Aorta (tissue), 5 donors: ENCODE measurements at regions of chr17 and their contacts with region 1.

Region 1: GRCh38 chr17:33520426-33521330 is 227.6 kb upstream of the ASIC2 start:
- DNase-seq: no peak
- ATAC-seq: no peak
- H3K4me3 ChIP-seq: no peak overlapping the region
- H3K27ac ChIP-seq: no peak overlapping the region
- H3K4me1 ChIP-seq: no peaks in the 10 kb centered on the region
- H3K27me3 ChIP-seq: no peaks in the 10 kb centered on the region

Region 2: GRCh38 chr17:33639103-33639880 is 118.6 kb after region 1 on chr17:
- intact Hi-C with region 1: loop called (anchors 10 kb)
- DNase-seq: no peak
- ATAC-seq: no peak
- H3K4me3 ChIP-seq: no peak overlapping the region
- H3K27ac ChIP-seq: no peak overlapping the region
- H3K4me1 ChIP-seq: no peaks in the 10 kb centered on the region
- H3K27me3 ChIP-seq: no peaks in the 10 kb centered on the region

Region 3: GRCh38 chr17:33647956-33648355 is 127.3 kb after region 1 on chr17:
- intact Hi-C with region 1: loop called in 1 of 2 experiments (anchors 10 kb)
- DNase-seq: no peak
- ATAC-seq: no peak
- H3K4me3 ChIP-seq: no peak overlapping the region
- H3K27ac ChIP-seq: no peak overlapping the region
- H3K4me1 ChIP-seq: no peaks in the 10 kb centered on the region
- H3K27me3 ChIP-seq: no peaks in the 10 kb centered on the region